Right lobe of liver (tissue), 6 donors: ENCODE measurements at regions of chr14 and their contacts with region 1.

Region 1: GRCh38 chr14:45526715-45527549 is 273.9 kb upstream of the MIS18BP1 start:
- DNase-seq: peak in 1 of 3 donors; percentile 52
- ATAC-seq: peak; percentile 85 to 97 (median 90)
- H3K4me3 ChIP-seq: no peak overlapping the region
- H3K27ac ChIP-seq: no peak overlapping the region
- H3K4me1 ChIP-seq: no peaks in the 10 kb centered on the region
- H3K27me3 ChIP-seq: no peaks in the 10 kb centered on the region
- CTCF ChIP-seq: peak; percentile 53 to 70 (median 60)
- POLR2A ChIP-seq: no peak

Region 2: GRCh38 chr14:45426670-45427282 is 100.2 kb before region 1 on chr14:
- intact Hi-C with region 1: loop called (anchors 10 kb)
- DNase-seq: no peak
- ATAC-seq: peak; percentile 76 to 86 (median 84)
- H3K4me3 ChIP-seq: no peak overlapping the region
- H3K27ac ChIP-seq: no peak overlapping the region
- H3K4me1 ChIP-seq: no peaks in the 10 kb centered on the region
- H3K27me3 ChIP-seq: no peaks in the 10 kb centered on the region
- CTCF ChIP-seq: peak; percentile 62 to 73 (median 68)
- POLR2A ChIP-seq: no peak

Region 3: DNA sequence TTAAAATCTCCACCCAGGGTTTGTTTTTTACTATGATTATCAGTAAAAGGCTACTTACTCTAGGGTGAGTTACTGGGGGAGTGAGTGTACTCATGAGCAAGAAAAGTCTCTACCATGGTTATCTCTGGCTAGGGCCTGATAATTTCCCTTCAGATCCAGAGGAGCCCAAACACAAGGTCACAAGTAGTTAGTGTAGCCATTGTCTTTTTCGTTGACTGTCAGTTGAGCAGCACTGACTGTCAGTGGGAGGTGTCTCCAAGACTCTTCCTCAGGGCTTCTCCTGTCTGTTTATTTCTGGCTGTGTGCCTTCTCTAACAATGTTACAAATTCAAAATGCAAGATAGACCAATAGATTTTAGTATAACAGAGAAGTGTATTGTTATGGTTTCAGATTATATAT is 92.7 kb before region 1 on chr14:
- intact Hi-C with region 1: loop called (anchors 10 kb)
- DNase-seq: no peak
- ATAC-seq: no peak
- H3K4me3 ChIP-seq: no peak overlapping the region
- H3K27ac ChIP-seq: no peak overlapping the region
- H3K4me1 ChIP-seq: no peaks in the 10 kb centered on the region
- H3K27me3 ChIP-seq: no peaks in the 10 kb centered on the region
- CTCF ChIP-seq: no peak
- POLR2A ChIP-seq: no peak